ENCODE measurements at regions of chr11 and their contacts with region 1.

Region 1: DNA sequence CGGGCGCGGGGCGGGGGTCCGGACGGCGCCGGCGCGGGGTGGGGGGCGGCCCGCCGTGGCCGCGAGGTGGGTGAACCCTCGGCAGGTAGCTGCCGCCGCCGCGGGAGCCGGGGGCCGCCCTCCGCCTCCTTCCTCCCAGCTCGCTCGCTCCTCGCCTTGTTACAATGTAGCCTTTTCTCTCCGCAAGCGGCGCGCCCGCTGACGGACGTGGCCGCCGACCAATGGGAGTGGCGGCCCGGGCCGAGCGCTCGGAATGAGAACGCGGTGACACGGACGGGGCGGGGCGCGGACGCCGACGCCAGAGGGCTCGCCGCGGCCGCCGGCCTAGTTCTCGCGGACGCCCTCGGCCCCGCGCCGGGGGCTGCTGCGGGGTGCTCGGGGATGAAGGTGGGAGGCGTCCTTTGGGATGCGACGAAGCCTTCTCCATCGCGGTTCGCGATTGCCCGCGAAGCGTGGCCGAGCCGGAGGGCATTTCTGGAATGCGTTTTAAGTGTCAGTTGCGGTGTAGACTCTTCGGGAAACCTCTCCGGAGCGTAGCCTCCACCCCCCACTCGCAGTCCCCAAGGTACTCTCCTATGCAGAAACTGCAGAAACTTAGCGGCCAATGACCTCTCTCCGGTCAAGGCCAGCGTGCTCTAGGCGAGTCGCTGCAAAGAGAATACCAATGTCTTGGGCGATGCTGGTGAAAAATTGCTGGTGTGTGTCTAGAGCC is 734 bp downstream of the PRDM11 start:
- DNase-seq: peak; percentile 96 to 97
- ATAC-seq: peak; percentile 95 to 98 (median 96)
- H3K4me3 ChIP-seq: peak overlapping the region; percentile 73
- H3K27ac ChIP-seq: peak overlapping the region; percentile 98
- H3K4me1 ChIP-seq: peaks cover 9% of the 10 kb centered on the region
- H3K27me3 ChIP-seq: no peaks in the 10 kb centered on the region
- CTCF ChIP-seq: no peak

Region 2: GRCh38 chr11:45180179-45180842 is 33.1 kb after region 1 on chr11:
- intact Hi-C with region 1: loop called (anchors 1 to 5 kb)
- DNase-seq: peak; percentile 68 to 86
- ATAC-seq: peak; percentile 83 to 88 (median 84)
- H3K4me3 ChIP-seq: peak overlapping the region; percentile 71
- H3K27ac ChIP-seq: peak overlapping the region; percentile 83
- H3K4me1 ChIP-seq: peaks cover 6% of the 10 kb centered on the region
- H3K27me3 ChIP-seq: no peaks in the 10 kb centered on the region
- CTCF ChIP-seq: peak; percentile 53

Measured in psoas muscle (tissue), 8 donors.